SK-N-SH (cell line): ENCODE measurements at regions of chr15 and their contacts with region 1.

Region 1: DNA sequence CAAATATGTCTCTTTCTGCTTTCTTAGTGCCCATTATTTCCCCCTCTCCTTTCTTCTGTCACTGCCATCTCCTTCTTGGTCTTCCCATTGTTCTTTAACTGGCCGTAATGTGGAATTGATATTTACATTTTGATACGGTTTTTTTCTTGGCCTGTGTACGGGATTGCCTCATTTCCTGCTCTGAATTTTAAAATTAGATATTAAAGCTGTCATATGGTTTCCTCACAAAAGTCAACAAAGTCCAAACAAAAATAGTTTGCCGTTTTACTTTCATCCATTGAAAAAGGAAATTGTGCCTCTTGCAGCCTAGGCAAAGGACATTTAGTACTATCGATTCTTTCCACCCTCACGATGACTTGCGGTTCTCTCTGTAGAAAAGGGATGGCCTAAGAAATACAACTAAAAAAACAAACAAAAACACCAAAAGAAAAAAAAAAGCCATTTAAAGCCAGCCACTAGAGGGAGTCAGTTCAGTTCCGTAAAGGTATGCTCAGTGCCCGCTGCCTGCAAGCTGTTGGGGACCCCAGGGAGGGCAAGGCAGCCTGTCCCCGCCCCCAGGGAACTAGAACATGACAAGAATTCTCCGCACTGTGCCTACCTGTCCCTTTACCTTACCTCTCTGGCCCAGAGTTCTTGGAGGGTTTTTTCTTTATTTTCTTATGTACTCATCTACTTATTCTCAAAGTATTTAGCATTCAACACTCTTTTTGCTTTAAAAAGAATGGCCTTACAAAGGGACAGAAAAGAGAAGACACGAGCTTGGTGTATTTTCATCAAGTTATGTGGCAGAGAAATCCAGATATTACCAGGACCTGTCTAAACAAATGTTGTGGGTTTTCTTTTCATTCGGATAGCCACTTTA is 30.0 kb upstream of the NR2E3 start:
- DNase-seq: peak; percentile 77
- H3K4me3 ChIP-seq: peak overlapping the region in 1 of 2 experiments; percentile 3; a peak in 1 of 4 replicates
- H3K27ac ChIP-seq: no peak overlapping the region
- H3K4me1 ChIP-seq: peaks cover 0 to 5% of the 10 kb centered on the region in 2 experiments; a peak in 1 of 4 replicates
- H3K27me3 ChIP-seq: no peaks in the 10 kb centered on the region
- CTCF ChIP-seq: peak; percentile 86
- EP300 ChIP-seq: no peak
- RAD21 ChIP-seq: peak; percentile 64

Region 2: DNA sequence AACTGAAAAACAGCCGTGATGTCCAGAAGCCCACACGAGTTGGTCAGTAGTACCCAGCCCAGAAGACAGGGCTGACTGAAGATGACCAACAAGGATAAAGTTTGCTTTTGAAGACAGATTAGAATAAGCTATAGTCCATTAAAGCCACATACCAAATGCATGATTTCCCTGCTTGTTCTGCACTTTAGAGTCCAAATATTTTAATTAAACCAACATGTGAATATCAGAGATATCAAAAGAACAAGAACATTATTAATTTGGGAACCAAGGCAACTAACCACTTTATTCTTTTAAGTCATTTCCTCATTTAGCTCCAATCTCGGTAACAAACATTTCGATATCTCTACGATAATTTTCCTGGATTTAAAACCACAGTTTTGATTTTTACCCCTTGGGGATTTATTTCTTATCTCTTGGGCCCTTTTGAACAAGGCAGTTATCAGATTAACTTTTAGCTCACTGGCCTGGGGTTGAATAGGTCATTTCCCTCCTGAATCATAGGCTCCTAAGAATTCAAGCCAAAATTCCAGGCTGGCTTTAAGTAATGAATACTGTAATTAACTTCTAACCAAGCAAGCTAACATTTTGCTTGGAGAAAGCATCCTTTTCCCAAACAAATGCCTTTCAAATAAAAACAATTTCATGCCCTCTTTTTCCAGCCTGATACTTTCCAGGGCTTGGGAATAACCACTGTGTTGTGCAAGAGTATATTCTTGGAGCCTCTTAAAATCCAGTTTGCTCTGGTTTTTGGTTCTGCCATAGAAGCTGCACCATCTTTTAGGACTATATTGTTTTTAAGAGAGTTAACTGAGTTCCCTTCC is 72.9 kb before region 1 on chr15:
- CTCF ChIA-PET with region 1: no interaction called
- POLR2A ChIA-PET with region 1: no interaction called
- DNase-seq: peak; percentile 37
- H3K4me3 ChIP-seq: no peak overlapping the region
- H3K27ac ChIP-seq: peak overlapping the region; percentile 89 to 95
- H3K4me1 ChIP-seq: peaks cover 21 to 37% of the 10 kb centered on the region in 2 experiments
- H3K27me3 ChIP-seq: no peaks in the 10 kb centered on the region
- CTCF ChIP-seq: no peak
- EP300 ChIP-seq: peak; percentile 39 to 89; a peak in 3 of 4 replicates
- RAD21 ChIP-seq: 0 out of 2 replicates have a peak, but pooled peaks have one; percentile 6

Region 3: DNA sequence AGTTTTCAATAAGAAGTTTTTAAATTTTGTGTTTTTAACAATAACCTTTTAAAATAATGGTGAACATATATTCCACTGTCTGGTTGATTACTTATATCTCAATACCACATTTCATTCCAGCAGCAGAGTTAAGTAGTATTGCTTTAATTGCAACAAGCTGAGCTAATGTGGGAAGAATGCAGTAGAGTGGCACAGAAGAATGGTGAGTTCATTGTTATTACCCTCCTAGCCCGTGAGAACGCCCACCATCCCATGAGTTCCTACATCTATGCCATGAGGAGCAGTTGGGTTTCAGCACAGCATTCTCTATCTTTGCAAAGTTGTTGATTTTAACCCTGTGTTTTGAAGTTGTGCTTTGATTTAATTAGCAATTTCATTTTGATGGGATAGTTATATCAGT is 12.2 kb after region 1 on chr15:
- CTCF ChIA-PET with region 1: interaction called, 19 read pairs
- POLR2A ChIA-PET with region 1: no interaction called
- DNase-seq: no peak
- H3K4me3 ChIP-seq: no peak overlapping the region
- H3K27ac ChIP-seq: peak overlapping the region in 1 of 2 experiments; percentile 45; a peak in 2 of 4 replicates
- H3K4me1 ChIP-seq: peaks cover 0 to 6% of the 10 kb centered on the region in 2 experiments; a peak in 2 of 4 replicates
- H3K27me3 ChIP-seq: no peaks in the 10 kb centered on the region
- CTCF ChIP-seq: no peak
- EP300 ChIP-seq: no peak
- RAD21 ChIP-seq: no peak